Ovary (tissue), 10 donors: ENCODE measurements at regions of chr7 and their contacts with region 1.

Region 1: DNA sequence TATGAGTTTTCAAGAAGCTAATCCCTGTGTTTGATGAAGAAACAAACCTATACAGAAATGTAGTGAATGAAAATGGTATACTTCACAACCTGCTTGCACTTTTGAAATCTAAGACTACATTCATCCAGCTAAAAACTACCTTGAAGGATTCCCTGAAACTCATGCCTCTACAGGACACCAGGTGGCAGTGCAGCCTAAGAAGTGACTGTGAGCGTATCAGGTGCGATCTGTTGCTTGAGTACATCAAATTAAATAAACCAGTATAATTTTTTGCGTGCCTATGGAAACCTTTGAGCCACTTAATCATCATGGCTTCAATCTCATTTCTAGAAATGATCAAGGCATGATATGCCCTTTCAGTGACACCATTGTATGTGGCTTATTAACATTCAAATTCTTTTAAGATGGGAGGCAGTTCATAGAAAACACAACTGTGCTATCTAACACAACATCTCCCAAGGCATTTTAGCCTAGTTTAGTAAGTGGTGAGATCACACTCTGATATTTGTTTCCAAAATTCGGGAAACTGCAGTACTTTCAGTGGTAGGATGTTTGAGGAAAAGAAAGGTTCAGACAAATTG is 57.4 kb downstream of the PPP1R17 start:
- DNase-seq: peak; percentile 18 to 69 (median 59)
- H3K4me3 ChIP-seq: no peak overlapping the region
- H3K27ac ChIP-seq: no peak overlapping the region
- H3K4me1 ChIP-seq: no peaks in the 10 kb centered on the region
- H3K27me3 ChIP-seq: no peaks in the 10 kb centered on the region
- CTCF ChIP-seq: peak; percentile 32 to 76 (median 60)
- EP300 ChIP-seq: no peak
- POLR2A ChIP-seq: no peak

Region 2: GRCh38 chr7:32204361-32205018 is 460.1 kb after region 1 on chr7:
- intact Hi-C with region 1: loop called in 3 of 4 experiments (anchors 5 kb)
- DNase-seq: peak; percentile 60 to 77 (median 68)
- H3K4me3 ChIP-seq: peak overlapping the region; percentile 22
- H3K27ac ChIP-seq: no peak overlapping the region
- H3K4me1 ChIP-seq: no peaks in the 10 kb centered on the region
- H3K27me3 ChIP-seq: no peaks in the 10 kb centered on the region
- CTCF ChIP-seq: peak in 2 of 3 donors; percentile 60 to 81
- EP300 ChIP-seq: no peak
- POLR2A ChIP-seq: no peak

Region 3: DNA sequence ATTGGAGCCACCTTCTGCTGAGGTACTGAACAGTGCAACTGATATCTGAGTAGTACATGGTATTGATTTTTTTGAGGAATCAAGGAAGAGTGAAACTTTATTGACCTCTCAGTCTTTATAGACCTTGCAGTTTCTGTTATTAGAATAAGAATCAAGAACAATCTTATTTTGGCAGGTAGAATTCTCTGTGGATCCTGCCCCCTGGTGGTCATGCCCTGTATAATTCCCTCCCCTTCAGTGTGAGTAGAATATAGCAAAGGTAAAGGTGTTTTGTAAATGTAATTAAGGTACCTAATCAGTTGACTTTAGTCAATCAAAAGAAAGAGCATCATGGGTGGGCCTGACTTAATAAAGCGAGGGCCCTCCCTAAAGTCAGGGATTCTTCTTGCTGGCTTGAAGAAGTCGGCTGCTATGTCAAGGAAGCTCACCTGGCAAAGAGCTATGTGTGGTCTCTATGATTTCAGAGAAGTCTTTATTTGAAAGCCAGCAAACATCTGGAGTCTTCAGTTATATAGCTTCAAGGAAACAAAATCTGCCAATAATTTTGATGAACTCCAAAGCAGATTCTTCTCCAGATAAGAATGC is 603.0 kb after region 1 on chr7:
- intact Hi-C with region 1: loop called in 1 of 4 experiments (anchors 10 kb)
- DNase-seq: no peak
- H3K4me3 ChIP-seq: no peak overlapping the region
- H3K27ac ChIP-seq: no peak overlapping the region
- H3K4me1 ChIP-seq: no peaks in the 10 kb centered on the region
- H3K27me3 ChIP-seq: no peaks in the 10 kb centered on the region
- CTCF ChIP-seq: no peak
- EP300 ChIP-seq: no peak
- POLR2A ChIP-seq: no peak